ENCODE measurements at regions of chr13 and their contacts with region 1.

Region 1: GRCh38 chr13:95698047-95698749 is 21.3 kb downstream of the DNAJC3 start:
- DNase-seq: peak; percentile 70
- H3K4me3 Mint-ChIP-seq: no peak overlapping the region
- H3K27ac Mint-ChIP-seq: peak overlapping the region; percentile 36
- H3K4me1 Mint-ChIP-seq: peaks cover 33% of the 10 kb centered on the region
- H3K27me3 Mint-ChIP-seq: no peaks in the 10 kb centered on the region
- CTCF ChIP-seq: peak; percentile 60

Region 2: DNA sequence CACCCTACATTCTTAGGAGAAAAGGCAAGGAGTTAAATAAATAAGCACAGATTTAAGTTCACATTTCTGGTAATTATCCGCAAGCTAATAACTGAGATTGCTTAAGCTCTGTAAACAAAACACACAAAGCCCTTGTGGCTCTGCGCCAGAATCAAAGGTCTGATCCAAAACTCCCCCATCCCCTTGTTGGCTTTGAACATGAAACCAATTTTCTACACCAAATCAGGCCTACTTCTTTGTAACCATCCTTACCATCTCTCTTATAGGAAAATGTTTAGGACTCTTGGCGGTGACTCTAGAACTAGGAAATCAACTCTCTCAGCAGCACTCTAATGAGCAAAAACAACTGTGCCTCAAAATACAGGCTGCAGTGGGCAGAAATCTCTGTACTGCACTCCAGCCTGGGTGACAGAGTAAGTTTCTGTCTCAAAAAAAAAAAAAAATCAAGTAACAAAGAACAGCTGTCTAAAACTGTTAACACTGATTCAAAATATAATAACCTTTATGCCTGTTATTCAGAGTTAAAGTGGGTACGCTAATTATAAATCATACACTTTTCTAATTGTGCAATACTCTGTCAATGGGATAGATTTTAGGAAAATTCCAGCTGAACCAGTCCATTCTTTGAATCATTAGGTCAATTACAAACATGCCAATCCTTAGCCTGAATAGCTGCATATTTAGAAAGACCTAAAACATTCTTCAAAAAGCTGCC is 422.7 kb before region 1 on chr13:
- CTCF ChIA-PET with region 1: no interaction called
- POLR2A ChIA-PET with region 1: no interaction called
- intact Hi-C with region 1: no loop called
- DNase-seq: no peak
- H3K4me3 Mint-ChIP-seq: no peak overlapping the region
- H3K27ac Mint-ChIP-seq: no peak overlapping the region
- H3K4me1 Mint-ChIP-seq: peaks cover 7% of the 10 kb centered on the region
- H3K27me3 Mint-ChIP-seq: no peaks in the 10 kb centered on the region
- CTCF ChIP-seq: no peak

Region 3: GRCh38 chr13:95684418-95684817 is 13.8 kb before region 1 on chr13:
- CTCF ChIA-PET with region 1: interaction called, 25 read pairs
- POLR2A ChIA-PET with region 1: interaction called, 3 read pairs
- intact Hi-C with region 1: loop called (anchors 2 kb)
- DNase-seq: no peak
- H3K4me3 Mint-ChIP-seq: no peak overlapping the region
- H3K27ac Mint-ChIP-seq: no peak overlapping the region
- H3K4me1 Mint-ChIP-seq: peaks cover 25% of the 10 kb centered on the region
- H3K27me3 Mint-ChIP-seq: no peaks in the 10 kb centered on the region
- CTCF ChIP-seq: no peak

Region 4: DNA sequence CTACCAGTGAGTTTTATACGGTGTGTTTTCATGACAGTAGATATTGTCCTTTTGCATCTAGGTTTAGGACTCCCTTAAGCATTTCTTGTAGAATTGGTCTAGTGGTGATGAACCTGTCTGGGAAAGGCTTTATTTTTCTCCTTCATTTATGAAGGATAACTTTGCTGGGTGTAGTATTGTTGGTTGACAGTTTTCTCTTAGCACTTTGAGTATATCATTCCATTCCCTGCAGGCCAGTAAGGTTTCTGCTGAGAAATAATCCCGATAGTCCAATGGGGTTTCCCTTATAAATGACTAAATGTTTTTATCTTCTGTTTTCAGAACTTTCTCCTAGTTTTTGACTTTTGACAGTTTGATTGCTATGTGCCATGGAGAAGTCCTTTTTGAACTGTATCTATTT is 35.9 kb after region 1 on chr13:
- CTCF ChIA-PET with region 1: no interaction called
- POLR2A ChIA-PET with region 1: no interaction called
- intact Hi-C with region 1: no loop called
- DNase-seq: no peak
- H3K4me3 Mint-ChIP-seq: no peak overlapping the region
- H3K27ac Mint-ChIP-seq: no peak overlapping the region
- H3K4me1 Mint-ChIP-seq: no peaks in the 10 kb centered on the region
- H3K27me3 Mint-ChIP-seq: no peaks in the 10 kb centered on the region
- CTCF ChIP-seq: no peak